Prostate gland (tissue), 2 donors: ENCODE measurements at regions of chr9 and their contacts with region 1.

Region 1: GRCh38 chr9:109903515-109904138 is 123.6 kb downstream of the PALM2AKAP2 start:
- DNase-seq: peak; percentile 55
- H3K4me3 ChIP-seq: no peak overlapping the region
- H3K27ac ChIP-seq: no peak overlapping the region
- H3K4me1 ChIP-seq: no peaks in the 10 kb centered on the region
- H3K27me3 ChIP-seq: no peaks in the 10 kb centered on the region
- CTCF ChIP-seq: peak; percentile 63 to 76 (median 70)
- POLR2A ChIP-seq: no peak

Region 2: GRCh38 chr9:110058304-110058953 is 154.8 kb after region 1 on chr9:
- intact Hi-C with region 1: loop called (anchors 5 kb)
- DNase-seq: no peak
- H3K4me3 ChIP-seq: no peak overlapping the region
- H3K27ac ChIP-seq: no peak overlapping the region
- H3K4me1 ChIP-seq: no peaks in the 10 kb centered on the region
- H3K27me3 ChIP-seq: no peaks in the 10 kb centered on the region
- CTCF ChIP-seq: peak in 3 of 4 experiments; percentile 47 to 62 (median 57)
- POLR2A ChIP-seq: no peak

Region 3: DNA sequence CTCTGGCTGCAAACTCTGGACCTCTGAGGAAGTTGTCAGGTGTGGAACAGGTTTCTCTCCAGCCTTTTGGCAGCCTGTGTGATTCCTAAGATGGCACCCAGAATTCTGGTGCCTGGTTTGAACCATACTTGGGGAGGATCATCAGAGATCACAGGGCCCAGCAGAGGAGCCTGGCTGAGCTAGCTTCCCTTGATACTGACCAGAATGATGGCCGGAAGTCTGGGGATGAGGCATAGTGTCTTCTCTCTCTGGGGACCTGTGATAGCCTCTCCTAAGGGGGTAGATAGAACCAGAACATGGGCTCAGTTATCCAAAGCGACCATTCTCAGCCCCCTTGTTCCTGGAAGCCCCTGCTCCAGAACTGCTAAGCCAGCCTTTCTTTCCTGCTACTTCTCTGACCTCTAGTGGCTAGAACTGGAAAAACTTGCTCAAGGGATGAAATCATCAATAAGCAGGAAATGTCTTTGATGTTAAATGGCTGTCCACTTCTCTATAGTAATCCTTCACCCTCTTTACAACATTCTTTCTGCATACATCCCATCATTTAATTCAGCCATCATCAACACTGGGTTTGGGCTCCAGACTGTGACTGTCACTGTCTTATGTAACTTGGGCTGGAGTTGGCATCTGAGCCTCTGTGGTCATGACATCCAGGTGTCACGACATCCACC is 249.2 kb after region 1 on chr9:
- intact Hi-C with region 1: loop called (anchors 2 kb)
- DNase-seq: no peak
- H3K4me3 ChIP-seq: no peak overlapping the region
- H3K27ac ChIP-seq: no peak overlapping the region
- H3K4me1 ChIP-seq: no peaks in the 10 kb centered on the region
- H3K27me3 ChIP-seq: no peaks in the 10 kb centered on the region
- CTCF ChIP-seq: peak; percentile 30 to 66 (median 65)
- POLR2A ChIP-seq: no peak

Region 4: GRCh38 chr9:110217656-110218099 is 314.1 kb after region 1 on chr9:
- intact Hi-C with region 1: loop called (anchors 5 kb)
- DNase-seq: peak; percentile 14
- H3K4me3 ChIP-seq: no peak overlapping the region
- H3K27ac ChIP-seq: no peak overlapping the region
- H3K4me1 ChIP-seq: no peaks in the 10 kb centered on the region
- H3K27me3 ChIP-seq: no peaks in the 10 kb centered on the region
- CTCF ChIP-seq: peak; percentile 69 to 89 (median 81)
- POLR2A ChIP-seq: no peak